Activated T-helper 2 cell treated with anti-CD3 and anti-CD28 coated beads, Interferon-gamma antibody, Interleukin-2, Interleukin-4, amounts not matched to agents 10 μg/mL and 5 μg/mL and 100 μg/mL, durations not matched to agents 14 hours and 24 hours and 36 hours (primary cell): ENCODE measurements at regions of chr14 and their contacts with region 1.

Region 1: GRCh38 chr14:105086833-105087307 is 21.6 kb upstream of the GPR132 start:
- DNase-seq: peak; percentile 76
- H3K4me3 Mint-ChIP-seq: peak overlapping the region; percentile 72
- H3K27ac Mint-ChIP-seq: peak overlapping the region; percentile 42
- H3K4me1 Mint-ChIP-seq: peaks cover 3% of the 10 kb centered on the region
- H3K27me3 Mint-ChIP-seq: peaks cover 14% of the 10 kb centered on the region

Region 2: DNA sequence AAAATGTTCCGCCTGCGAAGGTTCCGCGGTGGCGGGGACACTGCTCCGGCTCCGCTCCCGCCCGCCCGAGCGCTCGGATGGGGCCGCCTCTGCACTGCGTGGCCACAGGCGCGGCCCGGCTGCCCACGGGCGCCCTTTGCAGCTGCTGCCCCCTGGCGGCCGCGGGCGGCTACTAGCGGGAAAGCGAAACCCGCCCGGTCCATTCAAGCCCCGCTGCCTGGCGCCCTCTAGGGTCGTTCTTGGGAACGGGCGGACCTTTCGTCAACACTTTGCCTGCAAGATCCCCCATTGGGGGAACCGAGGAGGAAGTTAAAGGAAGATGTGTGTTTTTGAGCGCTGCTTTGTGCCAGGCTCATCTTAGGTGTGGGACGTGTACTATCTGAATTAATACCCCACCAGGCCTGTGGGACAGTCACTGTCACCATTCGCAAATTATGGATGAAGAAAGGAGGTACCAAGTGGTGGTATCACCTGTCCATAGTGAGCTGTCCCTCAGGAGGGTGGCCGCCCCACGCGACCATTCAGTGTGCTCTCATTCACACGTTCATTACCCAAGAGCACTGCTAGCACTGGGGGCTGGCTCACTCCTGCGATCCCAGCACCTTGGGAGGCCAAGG is 41.1 kb before region 1 on chr14:
- intact Hi-C with region 1: loop called (anchors 5 kb)
- DNase-seq: peak; percentile 86
- H3K4me3 Mint-ChIP-seq: no peak overlapping the region
- H3K27ac Mint-ChIP-seq: no peak overlapping the region
- H3K4me1 Mint-ChIP-seq: peaks cover 11% of the 10 kb centered on the region
- H3K27me3 Mint-ChIP-seq: no peaks in the 10 kb centered on the region

Region 3: GRCh38 chr14:105059035-105059924 is 27.6 kb before region 1 on chr14:
- intact Hi-C with region 1: loop called (anchors 1 kb)
- DNase-seq: no peak
- H3K4me3 Mint-ChIP-seq: peak overlapping the region; percentile 76
- H3K27ac Mint-ChIP-seq: peak overlapping the region; percentile 97
- H3K4me1 Mint-ChIP-seq: peaks cover 41% of the 10 kb centered on the region
- H3K27me3 Mint-ChIP-seq: no peaks in the 10 kb centered on the region

Region 4: DNA sequence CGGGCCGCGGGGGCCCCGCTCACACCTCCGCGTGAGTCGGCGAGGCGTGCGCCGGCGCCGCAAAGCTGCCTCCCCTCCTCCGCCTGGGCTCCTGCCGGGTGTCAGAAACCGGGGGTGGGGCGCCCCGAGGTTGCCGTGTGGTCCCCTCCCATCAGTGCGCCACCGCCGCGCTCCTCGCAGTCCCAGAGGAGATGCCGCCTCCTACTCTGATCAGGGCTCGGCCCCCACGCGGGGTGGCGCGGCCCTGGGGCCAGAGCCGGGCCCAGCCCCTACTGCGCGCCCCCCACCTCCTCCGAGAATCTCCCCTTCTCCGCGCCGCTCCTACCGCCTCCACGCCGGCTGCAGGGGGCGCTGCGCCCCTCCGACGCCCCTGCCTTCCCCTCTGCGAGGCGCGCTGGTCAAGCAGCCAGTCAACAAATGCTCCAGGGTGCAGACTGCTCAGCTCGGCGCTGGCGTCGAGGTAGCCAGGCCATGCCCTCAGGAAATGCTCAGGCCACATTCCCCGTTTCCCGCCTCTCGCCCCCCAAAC is 82.2 kb after region 1 on chr14:
- intact Hi-C with region 1: loop called (anchors 5 kb)
- DNase-seq: no peak
- H3K4me3 Mint-ChIP-seq: peak overlapping the region; percentile 54
- H3K27ac Mint-ChIP-seq: no peak overlapping the region
- H3K4me1 Mint-ChIP-seq: peaks cover 6% of the 10 kb centered on the region
- H3K27me3 Mint-ChIP-seq: peaks cover 19% of the 10 kb centered on the region

Region 5: GRCh38 chr14:105351920-105352851 is 265.3 kb after region 1 on chr14:
- intact Hi-C with region 1: loop called (anchors 1 kb)
- DNase-seq: peak; percentile 81
- H3K4me3 Mint-ChIP-seq: no peak overlapping the region
- H3K27ac Mint-ChIP-seq: no peak overlapping the region
- H3K4me1 Mint-ChIP-seq: peaks cover 2% of the 10 kb centered on the region
- H3K27me3 Mint-ChIP-seq: no peaks in the 10 kb centered on the region